ENCODE measurements at regions of chr19 and their contacts with region 1.

Region 1: DNA sequence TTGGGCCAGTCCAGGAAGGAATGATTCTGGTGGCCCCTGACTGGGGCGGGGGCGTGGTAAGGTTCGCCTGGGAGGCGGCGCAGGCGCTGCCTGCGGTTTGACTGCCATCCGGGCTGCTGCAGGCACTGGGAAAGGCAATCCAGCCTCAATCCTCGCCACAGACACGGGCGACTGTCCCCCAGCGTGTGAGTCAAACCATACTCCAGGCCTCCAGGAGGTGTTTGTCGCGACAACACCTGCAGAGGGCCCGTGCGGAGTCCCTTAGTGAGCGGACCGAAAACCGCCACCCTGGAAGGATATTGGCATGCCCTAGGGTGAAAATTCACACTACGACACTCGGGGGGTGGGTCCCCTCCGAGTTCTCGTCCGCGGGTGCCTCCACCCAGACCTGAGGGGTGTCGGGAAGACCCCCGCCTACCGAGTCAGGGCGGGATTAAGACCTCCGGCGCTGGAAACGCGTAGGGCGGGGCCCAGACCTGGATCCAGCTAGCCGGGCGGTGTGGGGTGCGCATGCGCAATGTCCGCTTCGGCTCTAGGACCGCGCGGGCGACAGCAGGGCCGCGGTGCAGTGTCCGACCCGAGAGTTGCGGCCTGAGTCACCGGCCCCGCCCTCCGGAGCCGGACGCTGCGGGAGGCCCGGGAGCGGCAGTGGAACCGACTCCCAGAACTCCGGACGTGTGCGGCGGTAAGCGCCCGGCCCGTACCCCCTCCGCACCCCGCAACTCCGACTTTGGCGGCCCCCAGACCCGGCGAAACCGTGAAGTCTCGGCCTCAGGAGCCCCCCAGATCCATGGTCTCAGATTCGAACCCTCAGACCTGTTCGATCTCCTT is at the start of gene CAPNS1:
- DNase-seq: peak; percentile 92
- H3K4me3 Mint-ChIP-seq: peak within 1 kb of the TSS; percentile 97
- H3K27ac Mint-ChIP-seq: peak within 1 kb of the TSS; percentile 99
- H3K4me1 Mint-ChIP-seq: peaks cover 20% of the 10 kb centered on the region
- H3K27me3 Mint-ChIP-seq: peaks cover 1% of the 10 kb centered on the region
- total RNA-seq, gene CAPNS1: 326 and 335 TPM in 2 replicates

Region 2: GRCh38 chr19:35949131-35949530 is 190.6 kb before region 1 on chr19:
- intact Hi-C with region 1: no loop called
- DNase-seq: no peak
- H3K4me3 Mint-ChIP-seq: no peak overlapping the region
- H3K27ac Mint-ChIP-seq: peak overlapping the region; percentile 2
- H3K4me1 Mint-ChIP-seq: peaks cover 40% of the 10 kb centered on the region
- H3K27me3 Mint-ChIP-seq: peaks cover 4% of the 10 kb centered on the region

Region 3: DNA sequence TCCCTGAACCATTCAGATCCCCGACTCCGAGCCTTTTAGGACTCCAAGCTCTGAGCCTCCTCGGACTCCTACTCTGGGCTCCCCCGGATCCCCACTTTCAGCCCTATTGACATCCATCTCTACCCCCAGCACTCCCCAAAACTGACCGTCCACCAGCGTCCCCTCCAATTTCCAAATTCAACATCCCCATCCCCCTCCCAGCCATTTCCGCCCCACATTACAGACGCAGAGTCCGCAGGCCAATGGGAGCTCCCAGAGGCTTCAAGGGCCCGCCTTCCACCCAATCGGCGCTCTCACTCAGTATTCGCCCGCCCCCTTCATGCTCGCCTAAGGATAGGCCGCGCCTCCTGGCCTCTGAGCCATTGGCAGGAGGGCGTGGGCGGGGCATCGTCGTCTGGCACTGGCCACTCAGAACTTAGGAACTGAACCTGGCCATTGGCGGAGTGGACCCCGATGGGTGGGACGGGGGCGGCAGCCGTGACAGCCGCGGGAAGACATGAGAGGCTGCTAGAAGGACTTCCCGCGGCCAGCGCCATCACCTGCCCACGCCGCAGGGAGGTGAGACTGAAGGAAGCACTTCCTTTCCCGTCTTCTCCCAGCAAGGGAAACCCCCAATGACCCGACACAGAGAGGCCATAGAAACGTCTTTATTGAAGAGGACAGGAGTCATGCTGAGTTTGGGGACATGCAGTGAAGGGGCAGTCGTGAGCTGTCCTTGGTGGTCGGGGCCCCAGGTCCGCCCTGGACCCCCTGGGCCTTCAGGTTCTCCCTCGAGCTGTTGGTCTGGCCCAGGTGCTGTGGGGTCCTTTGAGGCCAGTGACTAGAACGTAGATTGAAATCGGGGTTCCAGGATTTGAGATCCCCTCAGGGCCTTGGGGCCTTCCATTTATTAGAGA is 125.4 kb before region 1 on chr19 and contains the start of gene ALKBH6:
- intact Hi-C with region 1: loop called (anchors 1 kb)
- DNase-seq: peak; percentile 100
- H3K4me3 Mint-ChIP-seq: peak within 1 kb of the TSS; percentile 98
- H3K27ac Mint-ChIP-seq: peak within 1 kb of the TSS; percentile 96
- H3K4me1 Mint-ChIP-seq: peaks cover 46% of the 10 kb centered on the region
- H3K27me3 Mint-ChIP-seq: no peaks in the 10 kb centered on the region
- total RNA-seq, gene ALKBH6: 48.3 and 60.6 TPM in 2 replicates

Region 4: GRCh38 chr19:36093146-36093662 is 46.5 kb before region 1 on chr19:
- intact Hi-C with region 1: loop called (anchors 1 kb)
- DNase-seq: no peak
- H3K4me3 Mint-ChIP-seq: no peak overlapping the region
- H3K27ac Mint-ChIP-seq: peak overlapping the region; percentile 78
- H3K4me1 Mint-ChIP-seq: peaks cover 15% of the 10 kb centered on the region
- H3K27me3 Mint-ChIP-seq: no peaks in the 10 kb centered on the region

Region 5: GRCh38 chr19:36169084-36169760 is 29.5 kb after region 1 on chr19:
- intact Hi-C with region 1: loop called (anchors 1 kb)
- DNase-seq: no peak
- H3K4me3 Mint-ChIP-seq: no peak overlapping the region
- H3K27ac Mint-ChIP-seq: no peak overlapping the region
- H3K4me1 Mint-ChIP-seq: no peaks in the 10 kb centered on the region
- H3K27me3 Mint-ChIP-seq: peaks cover 1% of the 10 kb centered on the region

Region 6: DNA sequence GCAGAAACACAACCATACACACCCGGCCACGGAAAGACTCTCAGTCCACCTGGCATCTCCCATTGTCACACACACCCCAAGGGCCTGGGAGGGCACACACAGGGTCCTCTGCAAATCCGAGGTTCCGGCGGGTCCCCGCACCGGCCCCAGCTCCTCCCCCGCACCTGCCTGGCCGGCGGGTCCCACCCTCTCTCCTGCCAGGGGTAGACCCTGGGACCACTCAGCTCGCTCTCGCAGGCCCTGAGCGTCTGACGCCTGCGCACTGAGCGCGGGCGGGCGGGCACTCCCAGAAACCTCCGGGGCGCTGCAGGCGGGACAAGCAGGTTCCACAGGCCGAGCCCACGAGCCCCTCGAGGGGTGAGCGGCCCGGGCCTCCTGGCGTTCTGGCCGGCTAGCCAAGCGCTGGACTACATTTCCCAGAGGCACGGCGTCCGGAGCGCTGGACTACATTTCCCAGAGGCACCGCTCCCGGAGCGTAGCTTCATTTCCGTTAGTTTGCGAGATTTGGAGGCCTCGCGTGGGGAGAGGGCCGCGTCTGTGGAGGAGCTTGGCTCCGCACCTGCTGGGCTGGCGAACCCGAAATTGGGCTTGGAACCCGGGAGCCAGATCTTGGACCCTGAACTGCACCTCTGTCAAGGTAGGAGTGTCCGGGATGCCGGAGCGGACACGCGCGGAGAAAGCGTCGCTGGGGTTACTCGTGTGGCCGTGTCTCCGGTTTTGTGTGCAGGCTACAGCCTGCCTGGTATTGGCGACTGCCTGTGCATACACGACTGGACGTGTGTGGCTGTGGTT is 938.4 kb after region 1 on chr19 and contains the start of gene ZNF420:
- intact Hi-C with region 1: no loop called
- DNase-seq: peak; percentile 85
- H3K4me3 Mint-ChIP-seq: peak within 1 kb of the TSS; percentile 93
- H3K27ac Mint-ChIP-seq: peak within 1 kb of the TSS; percentile 90
- H3K4me1 Mint-ChIP-seq: peaks cover 21% of the 10 kb centered on the region
- H3K27me3 Mint-ChIP-seq: no peaks in the 10 kb centered on the region
- total RNA-seq, gene ZNF420: 5.9 and 9.1 TPM in 2 replicates